Caco-2 (cell line): ENCODE measurements at regions of chr3 and their contacts with region 1.

Region 1: DNA sequence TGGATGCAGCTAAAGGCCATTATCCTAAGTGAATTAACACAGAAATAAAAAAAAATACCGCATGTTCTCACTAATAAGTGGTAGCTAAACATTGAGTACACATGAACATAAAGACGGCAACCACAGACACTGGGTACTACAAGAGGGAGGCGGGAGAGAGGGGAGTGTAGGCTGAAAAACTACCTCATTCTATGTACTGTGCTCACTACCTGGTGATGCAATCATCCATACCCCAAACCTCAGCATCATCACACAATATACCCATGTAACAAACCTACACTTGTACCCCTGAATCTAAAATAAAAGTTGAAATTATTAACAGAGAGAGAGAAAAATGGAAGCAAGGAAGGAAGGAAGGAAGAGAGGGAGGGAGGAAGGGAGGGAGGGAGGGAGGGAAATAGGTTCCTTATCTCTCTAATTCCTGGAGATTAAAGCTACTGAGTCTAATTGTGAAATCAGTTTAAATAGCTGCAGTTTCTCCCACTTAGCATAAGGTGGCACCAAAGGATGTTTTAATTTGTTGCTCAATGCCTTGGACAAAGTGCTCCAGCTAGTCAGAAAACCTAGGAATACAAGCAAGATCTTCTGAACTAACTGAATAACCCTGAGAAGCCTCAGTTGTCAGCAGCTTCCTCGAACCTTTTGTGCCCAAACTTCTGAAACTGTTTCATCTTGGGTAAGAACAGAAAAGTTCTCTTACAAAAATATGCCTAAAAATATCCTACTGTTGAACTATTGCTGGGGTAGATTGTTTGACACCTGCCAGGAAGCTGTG is 79.4 kb upstream of the ATP11B start:
- DNase-seq: peak in 1 of 2 experiments; percentile 65
- H3K4me3 ChIP-seq: no peak overlapping the region
- H3K4me3 Mint-ChIP-seq: no peak overlapping the region
- H3K27ac Mint-ChIP-seq: no peak overlapping the region
- H3K4me1 ChIP-seq: peaks cover 38% of the 10 kb centered on the region
- H3K4me1 Mint-ChIP-seq: peaks cover 28% of the 10 kb centered on the region
- H3K27me3 ChIP-seq: no peaks in the 10 kb centered on the region
- H3K27me3 Mint-ChIP-seq: no peaks in the 10 kb centered on the region
- CTCF ChIP-seq: peak; percentile 63 to 71

Region 2: DNA sequence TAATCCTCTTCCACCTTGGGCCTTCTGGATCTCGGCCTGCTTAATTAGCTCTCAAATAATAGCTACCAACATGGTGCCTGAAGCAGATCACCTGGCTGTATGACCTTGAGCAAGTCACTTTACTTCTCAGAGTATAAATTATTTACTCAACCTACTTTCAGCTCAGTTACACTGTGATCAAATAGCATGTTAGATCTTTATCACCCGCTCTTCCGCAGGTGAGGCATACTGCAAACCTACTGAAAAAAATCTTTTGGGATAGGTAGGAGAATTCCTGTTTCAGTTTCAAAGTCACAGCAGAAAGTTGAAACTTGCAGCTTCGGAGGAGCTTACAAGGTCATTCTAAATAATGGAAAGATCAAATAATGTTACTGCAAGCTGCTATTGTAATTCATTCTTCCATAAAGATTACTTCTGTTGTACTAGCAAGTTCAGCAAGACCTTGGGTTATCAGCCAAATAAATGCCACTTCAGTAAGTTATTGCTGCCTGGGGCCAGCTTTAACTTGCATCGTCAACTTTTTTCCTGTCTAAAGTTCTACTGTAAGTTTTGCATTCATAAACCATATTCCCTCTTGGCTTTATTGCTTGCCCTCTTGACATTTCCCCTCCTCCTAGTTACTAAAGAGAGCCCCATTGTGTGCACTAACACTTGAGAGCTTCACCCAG is 189.1 kb before region 1 on chr3:
- CTCF ChIA-PET with region 1: no interaction called
- POLR2A ChIA-PET with region 1: no interaction called
- intact Hi-C with region 1: no loop called
- DNase-seq: no peak
- H3K4me3 ChIP-seq: no peak overlapping the region
- H3K4me3 Mint-ChIP-seq: no peak overlapping the region
- H3K27ac Mint-ChIP-seq: no peak overlapping the region
- H3K4me1 ChIP-seq: no peaks in the 10 kb centered on the region
- H3K4me1 Mint-ChIP-seq: peaks cover 7% of the 10 kb centered on the region
- H3K27me3 ChIP-seq: no peaks in the 10 kb centered on the region
- H3K27me3 Mint-ChIP-seq: no peaks in the 10 kb centered on the region
- CTCF ChIP-seq: no peak

Region 3: DNA sequence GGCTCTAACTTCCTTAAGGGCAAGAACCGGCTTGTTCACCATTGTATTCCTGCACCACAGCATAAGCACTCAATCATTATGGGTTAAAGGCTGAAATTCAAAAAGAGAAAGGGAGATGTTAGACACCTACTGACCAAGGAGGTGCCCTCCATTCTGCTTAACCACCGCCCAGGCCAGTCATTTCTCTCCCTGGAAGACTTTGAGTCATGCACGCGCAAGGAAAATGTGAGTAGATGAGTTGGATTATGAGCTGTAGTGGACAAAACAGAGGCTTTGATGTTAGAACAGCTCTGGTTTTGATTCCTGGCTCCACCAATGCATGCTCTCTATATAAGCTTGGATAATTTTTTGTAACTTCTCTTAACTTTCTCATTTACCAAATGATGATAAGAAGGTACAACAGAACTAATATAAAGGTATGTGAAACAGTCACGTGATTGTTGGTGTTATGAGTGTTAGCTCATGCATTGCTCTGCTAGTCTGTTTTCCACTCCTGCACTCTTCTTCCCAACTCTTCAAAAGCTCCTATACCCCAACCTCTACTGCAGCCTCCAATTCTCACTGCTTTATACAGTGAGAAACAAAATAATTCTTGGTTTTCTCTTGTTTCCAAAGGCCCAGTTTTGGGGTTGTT is 69.0 kb before region 1 on chr3:
- CTCF ChIA-PET with region 1: interaction called, 13 read pairs
- POLR2A ChIA-PET with region 1: no interaction called
- intact Hi-C with region 1: no loop called
- DNase-seq: no peak
- H3K4me3 ChIP-seq: no peak overlapping the region
- H3K4me3 Mint-ChIP-seq: no peak overlapping the region
- H3K27ac Mint-ChIP-seq: no peak overlapping the region
- H3K4me1 ChIP-seq: no peaks in the 10 kb centered on the region
- H3K4me1 Mint-ChIP-seq: no peaks in the 10 kb centered on the region
- H3K27me3 ChIP-seq: no peaks in the 10 kb centered on the region
- H3K27me3 Mint-ChIP-seq: no peaks in the 10 kb centered on the region
- CTCF ChIP-seq: no peak

Region 4: GRCh38 chr3:182760576-182761164 is 46.7 kb after region 1 on chr3:
- CTCF ChIA-PET with region 1: no interaction called
- POLR2A ChIA-PET with region 1: no interaction called
- intact Hi-C with region 1: loop called (anchors 1 kb)
- DNase-seq: peak; percentile 71 to 82
- H3K4me3 ChIP-seq: no peak overlapping the region
- H3K4me3 Mint-ChIP-seq: peak overlapping the region; percentile 67
- H3K27ac Mint-ChIP-seq: peak overlapping the region; percentile 87
- H3K4me1 ChIP-seq: peaks cover 28% of the 10 kb centered on the region
- H3K4me1 Mint-ChIP-seq: peaks cover 17% of the 10 kb centered on the region
- H3K27me3 ChIP-seq: no peaks in the 10 kb centered on the region
- H3K27me3 Mint-ChIP-seq: no peaks in the 10 kb centered on the region
- CTCF ChIP-seq: no peak

Region 5: DNA sequence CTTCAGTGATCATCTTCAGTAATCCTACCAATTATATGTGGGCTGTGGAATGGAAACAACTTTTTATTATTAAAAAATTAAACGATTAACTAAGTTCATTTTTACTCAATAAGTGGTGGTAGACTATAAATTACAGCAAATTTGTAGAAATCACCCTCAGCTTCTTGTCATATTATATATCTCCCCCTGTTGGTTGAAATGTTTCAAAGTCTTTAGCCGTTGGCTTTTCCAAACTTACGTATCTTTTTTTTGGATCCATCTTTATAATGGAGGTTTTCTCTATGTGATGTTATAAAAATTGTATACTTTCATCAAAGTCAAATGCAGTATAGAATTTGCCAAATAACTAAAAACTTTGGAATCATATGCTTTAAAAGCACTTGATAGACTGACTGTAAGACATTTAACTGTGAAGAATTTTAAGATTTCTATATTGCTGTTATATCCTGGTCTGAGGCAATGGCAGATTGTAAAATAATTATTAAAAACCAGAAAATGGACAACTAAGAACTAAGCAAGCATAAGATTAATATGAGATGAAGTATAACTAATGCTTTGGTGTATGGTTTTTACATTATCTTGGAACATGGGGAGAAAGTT is 124.0 kb after region 1 on chr3:
- CTCF ChIA-PET with region 1: interaction called, 23 read pairs
- POLR2A ChIA-PET with region 1: no interaction called
- intact Hi-C with region 1: loop called (anchors 1 kb)
- DNase-seq: peak in 1 of 2 experiments; percentile 15
- H3K4me3 ChIP-seq: no peak overlapping the region
- H3K4me3 Mint-ChIP-seq: no peak overlapping the region
- H3K27ac Mint-ChIP-seq: no peak overlapping the region
- H3K4me1 ChIP-seq: no peaks in the 10 kb centered on the region; the same call in 1 of the 2 replicates
- H3K4me1 Mint-ChIP-seq: no peaks in the 10 kb centered on the region
- H3K27me3 ChIP-seq: no peaks in the 10 kb centered on the region
- H3K27me3 Mint-ChIP-seq: no peaks in the 10 kb centered on the region
- CTCF ChIP-seq: peak; percentile 15 to 45

Region 6: GRCh38 chr3:182920515-182921084 is 206.7 kb after region 1 on chr3:
- CTCF ChIA-PET with region 1: no interaction called
- POLR2A ChIA-PET with region 1: no interaction called
- intact Hi-C with region 1: loop called (anchors 5 kb)
- DNase-seq: peak; percentile 7 to 34
- H3K4me3 ChIP-seq: no peak overlapping the region
- H3K4me3 Mint-ChIP-seq: no peak overlapping the region
- H3K27ac Mint-ChIP-seq: no peak overlapping the region
- H3K4me1 ChIP-seq: peaks cover 13% of the 10 kb centered on the region; the same call in 1 of the 2 replicates
- H3K4me1 Mint-ChIP-seq: peaks cover 10% of the 10 kb centered on the region
- H3K27me3 ChIP-seq: no peaks in the 10 kb centered on the region
- H3K27me3 Mint-ChIP-seq: no peaks in the 10 kb centered on the region
- CTCF ChIP-seq: no peak